A673 (cell line): ENCODE measurements at regions of chr9 and their contacts with region 1.

Region 1: DNA sequence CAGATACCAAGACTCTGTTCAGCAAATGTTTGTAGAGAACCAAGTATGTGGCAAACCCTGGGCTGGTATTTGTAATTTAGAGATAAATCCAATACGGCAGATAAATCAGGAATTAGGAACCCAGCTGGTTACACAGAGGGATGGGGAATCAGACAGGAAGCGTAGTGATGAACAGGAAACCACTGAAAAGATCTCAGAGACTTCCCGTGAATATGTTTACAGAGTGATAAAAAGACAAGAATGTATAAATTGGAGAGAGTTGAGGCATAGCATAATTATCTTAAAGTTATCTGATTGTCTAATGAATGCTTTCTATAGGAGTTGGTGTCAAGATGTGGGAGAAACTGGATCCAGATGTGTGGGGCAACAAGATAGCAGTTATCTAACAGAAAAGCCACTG is 246.6 kb upstream of the SMARCA2 start:
- DNase-seq: peak; percentile 91
- H3K4me3 ChIP-seq: no peak overlapping the region
- H3K27ac ChIP-seq: no peak overlapping the region
- H3K4me1 ChIP-seq: peaks cover 22% of the 10 kb centered on the region
- H3K27me3 ChIP-seq: no peaks in the 10 kb centered on the region
- CTCF ChIP-seq: no peak

Region 2: DNA sequence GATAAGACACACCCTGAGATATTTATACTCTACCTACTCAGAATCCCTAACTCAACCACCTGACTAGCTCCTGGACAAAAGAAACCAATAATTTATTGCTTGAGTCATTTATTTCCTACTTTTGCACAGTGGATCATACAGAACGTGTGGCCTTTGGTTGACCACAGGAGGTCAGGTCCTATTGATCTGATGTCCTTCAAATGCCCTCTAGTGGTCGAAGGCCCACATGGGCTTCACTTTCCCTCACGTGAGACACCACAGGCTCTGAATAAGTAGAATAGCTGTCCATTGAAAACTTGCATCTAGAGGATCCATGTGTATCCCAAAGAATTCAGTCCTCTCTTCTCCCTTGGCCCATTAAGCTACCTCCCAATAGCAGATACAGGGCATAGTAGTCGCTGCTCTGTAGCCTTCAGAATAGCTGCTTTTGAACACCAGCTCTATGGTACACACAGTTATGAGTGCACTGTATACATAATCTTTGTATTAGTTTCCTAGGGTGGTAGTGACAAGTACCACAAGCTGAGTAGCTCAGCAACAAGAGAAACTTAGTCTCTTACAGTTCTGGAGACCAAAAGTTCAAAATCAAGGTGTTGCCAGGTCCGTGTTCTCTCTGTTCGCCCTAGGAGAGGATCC is 69.0 kb after region 1 on chr9:
- CTCF ChIA-PET with region 1: no interaction called
- POLR2A ChIA-PET with region 1: no interaction called
- intact Hi-C with region 1: loop called (anchors 1 kb)
- DNase-seq: peak; percentile 39
- H3K4me3 ChIP-seq: no peak overlapping the region
- H3K27ac ChIP-seq: no peak overlapping the region
- H3K4me1 ChIP-seq: peaks cover 15% of the 10 kb centered on the region
- H3K27me3 ChIP-seq: peaks cover 3% of the 10 kb centered on the region
- CTCF ChIP-seq: peak; percentile 71

Region 3: GRCh38 chr9:2066312-2067273 is 298.0 kb after region 1 on chr9:
- CTCF ChIA-PET with region 1: no interaction called
- POLR2A ChIA-PET with region 1: no interaction called
- intact Hi-C with region 1: no loop called
- DNase-seq: peak; percentile 51
- H3K4me3 ChIP-seq: no peak overlapping the region
- H3K27ac ChIP-seq: no peak overlapping the region
- H3K4me1 ChIP-seq: no peaks in the 10 kb centered on the region
- H3K27me3 ChIP-seq: no peaks in the 10 kb centered on the region
- CTCF ChIP-seq: peak; percentile 42; the same call in 1 of the 2 replicates

Region 4: DNA sequence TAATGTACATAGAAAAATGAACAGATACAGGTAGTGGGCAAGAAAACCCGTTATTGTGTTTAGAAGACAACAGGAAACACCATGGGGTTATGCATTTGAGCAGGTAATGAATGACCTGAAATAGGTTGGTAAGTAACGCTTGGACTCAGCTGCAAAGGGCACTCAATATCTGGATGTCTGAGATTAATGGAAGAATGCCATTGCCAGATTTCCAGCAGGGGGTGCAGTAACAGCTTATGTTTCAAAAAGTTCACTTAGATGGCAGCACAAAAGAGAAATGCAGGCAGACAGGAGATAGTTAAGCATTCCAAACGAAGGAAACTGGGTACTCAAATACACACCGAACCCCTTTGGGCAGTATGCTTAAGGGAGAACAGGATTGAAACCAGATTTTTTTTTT is 567.5 kb after region 1 on chr9:
- CTCF ChIA-PET with region 1: no interaction called
- POLR2A ChIA-PET with region 1: no interaction called
- intact Hi-C with region 1: no loop called
- DNase-seq: peak; percentile 30
- H3K4me3 ChIP-seq: no peak overlapping the region
- H3K27ac ChIP-seq: no peak overlapping the region
- H3K4me1 ChIP-seq: no peaks in the 10 kb centered on the region
- H3K27me3 ChIP-seq: no peaks in the 10 kb centered on the region
- CTCF ChIP-seq: peak; percentile 48

Region 5: DNA sequence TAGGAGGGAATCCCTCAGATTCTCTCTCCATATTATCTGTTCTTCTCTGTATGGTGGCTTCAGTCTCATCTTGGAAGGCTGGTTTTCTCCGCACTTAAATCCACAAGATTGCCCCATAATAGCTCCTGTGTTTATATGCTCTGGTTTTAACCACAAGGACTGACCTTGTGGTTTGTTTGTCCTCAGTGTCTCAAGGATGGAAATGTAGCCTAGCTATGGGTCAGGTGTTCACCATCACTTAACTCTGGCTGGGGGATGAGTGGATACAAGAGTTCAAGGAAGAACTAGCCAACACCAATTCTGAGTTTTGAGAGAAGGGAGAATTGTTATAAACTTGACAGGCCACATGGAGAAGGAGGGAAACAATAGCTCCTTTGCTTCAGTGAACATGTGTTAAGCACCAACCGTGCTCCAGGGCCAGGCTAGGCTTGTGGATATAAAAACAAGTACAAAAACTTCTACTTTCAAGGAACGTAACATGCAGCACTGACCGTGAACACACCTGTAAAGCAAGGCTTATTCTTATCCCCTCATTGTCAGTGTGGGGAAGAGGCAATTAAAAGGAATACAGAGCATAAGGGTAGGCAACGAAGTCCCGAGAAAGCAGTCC is 777.4 kb after region 1 on chr9:
- CTCF ChIA-PET with region 1: no interaction called
- POLR2A ChIA-PET with region 1: no interaction called
- intact Hi-C with region 1: no loop called
- DNase-seq: no peak
- H3K4me3 ChIP-seq: no peak overlapping the region
- H3K27ac ChIP-seq: no peak overlapping the region
- H3K4me1 ChIP-seq: no peaks in the 10 kb centered on the region
- H3K27me3 ChIP-seq: no peaks in the 10 kb centered on the region
- CTCF ChIP-seq: no peak